Activated T-helper 2 cell treated with anti-CD3 and anti-CD28 coated beads, Interferon-gamma antibody, Interleukin-2, Interleukin-4, amounts not matched to agents 10 μg/mL and 5 μg/mL and 100 μg/mL, durations not matched to agents 14 hours and 24 hours and 36 hours (primary cell): ENCODE measurements at regions of chr5 and their contacts with region 1.

Region 1: DNA sequence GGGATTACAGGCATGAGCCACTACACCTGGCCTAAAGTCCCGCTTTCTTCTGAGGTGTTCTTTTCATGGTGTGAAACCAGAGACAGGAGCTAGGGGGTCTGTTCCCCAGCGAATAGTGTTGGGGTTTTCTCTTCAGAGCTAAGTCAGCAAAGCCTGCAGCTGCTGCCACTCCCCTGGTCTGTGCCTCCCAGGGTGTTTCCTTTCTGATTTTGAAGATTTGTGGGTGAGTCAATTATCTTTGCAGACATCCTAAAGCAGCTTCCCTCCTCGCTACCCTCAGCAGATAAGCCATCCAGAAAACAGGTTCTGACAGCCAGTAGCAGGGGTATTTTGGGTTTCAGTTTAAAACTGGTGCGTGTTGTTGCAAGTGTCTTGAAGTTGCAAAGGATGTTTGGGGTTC is 72.0 kb upstream of the IQGAP2 start:
- DNase-seq: peak; percentile 58
- H3K4me3 Mint-ChIP-seq: peak overlapping the region; percentile 37
- H3K27ac Mint-ChIP-seq: peak overlapping the region; percentile 69
- H3K4me1 Mint-ChIP-seq: peaks cover 64% of the 10 kb centered on the region
- H3K27me3 Mint-ChIP-seq: no peaks in the 10 kb centered on the region

Region 2: GRCh38 chr5:76367623-76368371 is 36.7 kb after region 1 on chr5:
- intact Hi-C with region 1: loop called (anchors 5 kb)
- DNase-seq: no peak
- H3K4me3 Mint-ChIP-seq: no peak overlapping the region
- H3K27ac Mint-ChIP-seq: peak overlapping the region; percentile 55
- H3K4me1 Mint-ChIP-seq: peaks cover 10% of the 10 kb centered on the region
- H3K27me3 Mint-ChIP-seq: peaks cover 2% of the 10 kb centered on the region